HEK293T (cell line): ENCODE measurements at regions of chr1 and their contacts with region 1.

Region 1: DNA sequence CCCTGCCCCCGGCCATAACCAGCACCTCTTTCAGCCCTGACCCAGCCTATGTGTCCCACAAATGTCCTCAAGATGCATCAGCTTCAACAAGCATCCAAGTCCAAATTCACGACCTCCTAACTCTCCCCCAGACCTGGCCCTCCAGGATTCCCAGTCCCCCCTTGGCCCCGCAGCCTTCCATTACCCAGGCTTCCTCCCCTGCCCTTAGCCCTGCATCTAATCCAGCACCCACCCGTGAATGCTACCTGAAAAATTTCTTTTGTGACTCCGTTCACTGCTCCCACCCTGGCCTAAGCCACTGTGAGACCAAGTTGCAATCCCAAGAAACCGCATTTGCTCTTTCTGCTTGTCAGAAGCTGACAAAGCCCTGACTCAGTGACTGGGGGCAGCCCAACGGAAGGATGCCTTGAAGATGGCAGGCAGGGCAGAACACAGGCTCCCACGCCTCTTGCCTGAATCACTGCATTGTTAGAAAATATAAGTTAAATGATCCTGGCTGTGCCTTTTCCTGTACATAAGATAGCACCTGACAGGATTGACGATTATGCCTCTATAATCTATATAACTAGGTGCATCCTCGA is 939 bp upstream of the MFAP2 start:
- DNase-seq: no peak

Region 2: GRCh38 chr1:17009706-17010105 is 28.3 kb after region 1 on chr1:
- CTCF ChIA-PET with region 1: interaction called, 10 read pairs
- POLR2A ChIA-PET with region 1: interaction called, 3 read pairs
- DNase-seq: no peak

Region 3: DNA sequence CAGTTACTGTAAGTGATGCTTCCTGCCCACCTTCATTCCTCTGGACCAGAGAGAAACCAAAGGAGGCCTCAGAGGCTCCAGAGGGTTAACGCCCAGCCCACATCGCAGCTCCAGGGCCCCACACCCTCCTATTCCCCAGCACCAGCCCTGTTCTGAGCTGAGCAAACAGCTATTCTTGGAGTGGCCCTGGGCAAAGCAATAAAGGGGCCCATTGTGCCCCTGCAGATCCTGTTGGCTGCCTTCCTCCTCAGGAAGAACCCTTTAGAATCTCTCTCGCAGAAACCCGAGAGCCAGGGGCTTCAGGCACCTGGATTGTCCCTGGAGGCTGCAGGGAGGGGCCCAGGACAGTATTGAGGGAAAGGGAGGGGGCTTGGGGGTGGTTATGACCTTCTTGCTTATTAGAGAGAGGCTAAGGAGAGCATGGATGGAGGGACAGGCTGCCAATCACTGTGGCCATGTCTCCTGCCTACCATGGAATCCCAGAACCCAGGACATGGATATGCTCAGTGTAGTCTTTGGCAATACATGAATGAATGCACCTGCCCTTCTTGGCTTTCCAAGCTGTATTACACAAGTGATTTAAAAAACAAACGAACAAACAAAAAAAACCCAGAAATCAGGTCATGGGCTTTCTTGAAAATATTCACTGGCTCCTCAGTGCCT is 128.7 kb after region 1 on chr1:
- CTCF ChIA-PET with region 1: no interaction called
- POLR2A ChIA-PET with region 1: no interaction called
- DNase-seq: no peak